OCI-LY7 (cell line): ENCODE measurements at regions of chr16 and their contacts with region 1.

Region 1: GRCh38 chr16:30761928-30762810 is at the starts of genes CFAP119 and RNF40:
- DNase-seq: peak; percentile 93
- H3K4me3 ChIP-seq: peak within 1 kb of the TSS; percentile 84
- H3K27ac ChIP-seq: peak within 1 kb of the TSS; percentile 57
- H3K4me1 ChIP-seq: peaks cover 49% of the 10 kb centered on the region
- CTCF ChIP-seq: no peak
- total RNA-seq, gene CFAP119: 20.7 and 27.4 TPM in 2 replicates
- total RNA-seq, gene RNF40: 54.8 and 70.5 TPM in 2 replicates

Region 2: GRCh38 chr16:28879841-28880588 is 1882.2 kb before region 1 on chr16:
- CTCF ChIA-PET with region 1: no interaction called
- POLR2A ChIA-PET with region 1: no interaction called
- intact Hi-C with region 1: loop called (anchors 10 kb)
- DNase-seq: peak; percentile 93
- H3K4me3 ChIP-seq: peak overlapping the region; percentile 77
- H3K27ac ChIP-seq: peak overlapping the region; percentile 64
- H3K4me1 ChIP-seq: peaks cover 24% of the 10 kb centered on the region
- CTCF ChIP-seq: no peak

Region 3: DNA sequence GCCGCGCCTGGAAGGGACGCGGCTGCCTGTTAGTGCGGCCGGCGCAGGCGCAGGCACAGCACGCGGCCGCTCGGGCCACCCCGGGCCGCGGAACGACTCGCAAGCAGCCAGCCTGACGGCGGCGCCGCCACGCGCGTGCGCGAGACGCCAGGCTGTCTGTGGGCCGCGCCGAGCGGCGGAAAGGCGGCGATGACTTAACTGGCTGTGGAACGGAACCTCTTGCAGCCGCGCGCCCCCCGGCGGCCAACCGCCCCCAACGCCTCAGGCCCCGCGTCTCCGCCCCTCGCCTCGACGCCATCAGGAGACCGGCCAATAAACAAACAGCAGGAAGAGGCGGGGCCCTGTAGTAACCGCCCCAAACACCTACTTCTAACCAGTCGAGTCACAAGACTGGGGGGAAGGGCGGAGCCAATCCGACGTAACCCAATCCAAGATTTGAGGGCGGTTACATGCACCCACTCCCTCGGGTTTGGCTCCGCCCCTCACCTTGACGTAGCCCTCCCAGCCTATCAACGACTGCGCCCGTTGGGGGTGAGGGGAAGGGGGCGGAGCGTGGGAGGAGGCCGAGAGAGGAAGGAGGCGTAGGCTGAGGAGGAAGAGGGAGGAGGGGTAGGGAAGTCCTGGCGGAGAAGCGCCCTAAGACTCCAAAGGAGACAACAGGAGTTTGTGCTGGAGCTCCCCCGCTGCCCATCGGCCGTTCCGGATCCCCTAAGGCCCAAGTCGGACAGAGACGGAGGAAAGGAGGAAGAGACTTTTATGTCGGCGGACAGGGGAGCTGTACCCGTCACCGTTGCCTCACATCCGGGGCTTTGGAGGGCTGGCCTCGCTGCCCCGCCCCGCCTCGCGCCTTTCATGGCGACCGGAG is 104.1 kb before region 1 on chr16 and contains the start of gene FBRS:
- CTCF ChIA-PET with region 1: no interaction called
- POLR2A ChIA-PET with region 1: no interaction called
- intact Hi-C with region 1: loop called (anchors 2 kb)
- DNase-seq: peak; percentile 100
- H3K4me3 ChIP-seq: peak within 1 kb of the TSS; percentile 99
- H3K27ac ChIP-seq: peak within 1 kb of the TSS; percentile 87
- H3K4me1 ChIP-seq: peaks cover 22% of the 10 kb centered on the region
- CTCF ChIP-seq: peak; percentile 85
- total RNA-seq, gene FBRS: 31.8 and 36.8 TPM in 2 replicates

Region 4: DNA sequence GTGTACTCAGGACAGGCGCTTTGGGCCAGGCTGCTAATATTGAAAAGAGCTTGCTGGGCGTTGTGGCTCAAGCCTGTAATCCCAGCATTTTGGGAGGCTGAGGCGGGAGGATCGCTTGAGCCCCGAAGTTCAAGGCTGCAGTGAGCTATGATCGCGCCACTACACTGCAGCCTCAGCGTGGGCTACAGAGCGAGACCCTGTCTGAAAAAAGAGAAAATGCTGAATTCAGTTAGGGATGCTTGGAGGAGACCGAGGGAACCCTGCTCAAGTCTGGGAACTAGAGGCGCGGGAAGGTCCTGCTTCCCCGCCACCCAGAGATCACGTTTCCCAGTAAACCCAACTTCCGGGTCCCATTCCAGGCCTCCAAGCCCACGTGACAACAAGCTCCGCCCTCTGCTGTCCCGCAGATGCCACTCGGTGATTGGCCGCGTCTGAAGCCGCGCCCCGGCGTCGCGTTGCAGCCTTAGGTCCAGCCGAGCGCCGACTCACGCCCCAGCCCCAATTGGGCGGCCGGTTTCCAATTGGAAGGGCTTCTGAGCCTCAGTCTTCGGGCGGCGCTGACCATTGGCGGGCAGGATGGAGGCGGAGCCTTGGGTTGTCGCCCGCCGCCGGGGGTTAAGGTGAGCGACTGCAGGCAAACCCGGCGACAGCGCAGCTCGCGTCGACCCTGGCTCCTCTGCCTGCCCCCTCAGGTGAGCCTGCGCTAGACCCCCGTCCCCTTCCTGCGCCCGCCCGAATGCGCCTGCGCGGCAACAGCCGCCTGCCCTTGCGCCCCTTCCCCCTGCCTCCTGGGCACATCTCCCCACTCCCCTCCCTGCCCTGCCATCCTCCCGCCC is 14.2 kb before region 1 on chr16 and contains the start of gene PHKG2:
- CTCF ChIA-PET with region 1: no interaction called
- POLR2A ChIA-PET with region 1: interaction called, 5 read pairs
- intact Hi-C with region 1: loop called (anchors 2 kb)
- DNase-seq: peak; percentile 99
- H3K4me3 ChIP-seq: peak within 1 kb of the TSS; percentile 87
- H3K27ac ChIP-seq: peak within 1 kb of the TSS; percentile 40
- H3K4me1 ChIP-seq: peaks cover 15% of the 10 kb centered on the region
- CTCF ChIP-seq: no peak
- total RNA-seq, gene PHKG2: 37.6 and 40.5 TPM in 2 replicates